Activated T-helper 1 cell treated with anti-CD3 and anti-CD28 coated beads, Interleukin-12 subunit alpha, Interleukin-12 subunit beta, Interleukin-2, Interleukin-4 antibody, amounts not matched to agents 30 ng/mL and 10 ng/mL and 1 ng/mL, durations not matched to agents 14 hours and 24 hours and 36 hours (primary cell): ENCODE measurements at regions of chr9 and their contacts with region 1.

Region 1: GRCh38 chr9:128322404-128323211 is at the starts of genes COQ4 and TRUB2:
- DNase-seq: peak; percentile 91
- H3K4me3 Mint-ChIP-seq: peak within 1 kb of the TSS; percentile 98
- H3K27ac Mint-ChIP-seq: peak within 1 kb of the TSS; percentile 100
- H3K4me1 Mint-ChIP-seq: peaks cover 12% of the 10 kb centered on the region
- H3K27me3 Mint-ChIP-seq: peaks cover 2% of the 10 kb centered on the region
- total RNA-seq, gene COQ4: 59.0 and 59.5 TPM in 2 replicates
- total RNA-seq, gene TRUB2: 41.8 and 44.0 TPM in 2 replicates

Region 2: DNA sequence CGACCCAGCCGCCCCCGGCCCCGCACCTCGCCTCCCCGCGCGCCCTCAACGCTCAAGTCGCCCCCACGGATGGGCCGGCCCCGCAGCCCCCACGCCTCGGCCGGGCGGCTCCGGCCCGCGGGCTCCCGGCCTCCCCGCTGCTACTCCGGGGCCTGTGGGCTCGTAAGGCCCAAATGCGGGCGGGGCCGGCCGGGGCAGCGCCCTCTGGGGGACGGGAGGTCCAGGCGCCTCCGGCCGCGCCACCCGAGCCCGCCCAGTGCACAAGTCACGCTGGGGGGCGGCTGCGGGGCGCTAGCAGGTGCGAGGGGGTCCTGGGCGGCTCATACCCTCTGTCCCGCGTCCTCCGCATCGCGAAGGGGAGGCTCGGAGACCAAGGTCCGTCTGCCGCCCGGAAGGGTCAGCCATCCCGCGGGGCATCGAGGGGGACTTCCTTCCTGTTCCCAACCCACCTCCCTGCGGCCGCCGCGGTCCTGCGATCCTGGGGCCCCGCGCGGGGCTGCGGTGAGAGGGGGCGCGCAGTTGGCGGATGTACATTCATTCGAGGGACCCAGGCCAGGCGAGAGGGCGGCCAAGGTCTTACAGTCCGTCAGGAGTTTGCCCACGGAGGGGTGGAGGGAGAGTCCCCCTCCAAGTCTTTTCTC is 131.1 kb before region 1 on chr9 and contains the start of gene CIZ1:
- intact Hi-C with region 1: loop called (anchors 1 kb)
- DNase-seq: peak; percentile 69
- H3K4me3 Mint-ChIP-seq: peak within 1 kb of the TSS; percentile 98
- H3K27ac Mint-ChIP-seq: peak within 1 kb of the TSS; percentile 96
- H3K4me1 Mint-ChIP-seq: peaks cover 23% of the 10 kb centered on the region
- H3K27me3 Mint-ChIP-seq: no peaks in the 10 kb centered on the region
- total RNA-seq, gene CIZ1: 154 and 158 TPM in 2 replicates

Region 3: DNA sequence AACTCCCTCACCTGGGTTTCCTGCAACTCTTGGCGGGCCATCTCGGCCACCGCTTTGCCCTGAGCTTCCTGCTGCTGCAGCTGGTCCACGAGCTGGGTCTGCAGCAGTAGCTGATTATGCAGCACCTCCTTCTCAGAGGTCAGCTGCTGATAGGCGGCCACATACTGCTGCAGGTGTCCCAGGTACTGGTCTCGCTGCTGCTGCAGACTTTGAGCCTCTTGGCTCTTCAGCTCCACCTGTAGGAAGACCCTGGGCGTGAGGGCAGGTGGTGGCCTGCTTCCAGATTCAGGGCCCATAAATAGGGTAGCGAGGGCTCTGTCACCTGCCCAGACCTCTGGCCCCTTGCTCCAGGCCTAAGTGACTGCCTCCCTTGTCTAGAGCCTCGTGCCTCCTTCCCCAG is 63.5 kb before region 1 on chr9:
- intact Hi-C with region 1: no loop called
- DNase-seq: no peak
- H3K4me3 Mint-ChIP-seq: no peak overlapping the region
- H3K27ac Mint-ChIP-seq: no peak overlapping the region
- H3K4me1 Mint-ChIP-seq: no peaks in the 10 kb centered on the region
- H3K27me3 Mint-ChIP-seq: no peaks in the 10 kb centered on the region

Region 4: GRCh38 chr9:128275996-128276573 is 46.5 kb before region 1 on chr9 and contains the starts of genes GOLGA2 and SWI5:
- intact Hi-C with region 1: loop called (anchors 1 kb)
- DNase-seq: peak; percentile 100
- H3K4me3 Mint-ChIP-seq: peak within 1 kb of the TSS; percentile 98
- H3K27ac Mint-ChIP-seq: peak within 1 kb of the TSS; percentile 91
- H3K4me1 Mint-ChIP-seq: peaks cover 54% of the 10 kb centered on the region
- H3K27me3 Mint-ChIP-seq: no peaks in the 10 kb centered on the region
- total RNA-seq, gene GOLGA2: 52.3 and 53.0 TPM in 2 replicates
- total RNA-seq, gene SWI5: 10.4 and 13.3 TPM in 2 replicates

Region 5: DNA sequence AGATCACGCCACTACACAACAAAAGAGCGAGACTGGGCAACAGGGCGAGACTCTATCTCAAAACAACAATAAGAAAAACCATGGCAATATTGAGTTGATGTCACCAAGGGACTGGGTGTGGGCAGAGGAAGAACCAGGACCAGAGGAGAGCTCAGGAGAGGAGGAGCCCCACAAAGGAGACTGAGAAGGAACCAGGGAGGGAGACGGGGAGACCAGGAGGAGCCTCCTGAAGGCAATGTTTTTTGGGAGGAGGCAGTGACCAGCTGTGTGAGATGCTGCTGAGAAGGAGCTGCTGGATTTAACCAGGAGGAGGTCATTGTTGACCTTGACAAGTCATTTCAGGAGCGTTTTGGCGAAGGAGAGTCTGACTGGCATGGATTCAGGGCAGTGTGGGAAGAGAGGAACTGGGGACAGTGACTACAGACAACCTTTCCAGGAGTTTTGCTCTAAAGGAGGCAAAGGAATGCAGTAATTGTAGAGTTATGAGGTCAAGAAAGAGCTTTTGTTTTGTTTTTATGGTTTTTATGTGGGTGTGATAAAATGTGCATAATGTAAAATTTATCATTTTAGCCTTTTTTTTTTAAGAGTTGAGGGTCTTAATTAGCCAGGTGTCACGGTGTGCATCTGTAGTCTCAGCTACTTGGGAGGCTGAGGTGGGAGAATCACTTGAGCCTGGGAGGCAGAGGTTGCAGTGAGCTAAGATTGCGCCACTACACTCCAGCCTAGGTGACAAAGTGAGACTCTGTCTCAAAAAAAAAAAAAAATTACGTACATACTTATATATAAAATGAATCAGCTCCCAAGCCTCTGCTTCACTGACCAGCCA is 18.2 kb before region 1 on chr9:
- intact Hi-C with region 1: no loop called
- DNase-seq: no peak
- H3K4me3 Mint-ChIP-seq: no peak overlapping the region
- H3K27ac Mint-ChIP-seq: no peak overlapping the region
- H3K4me1 Mint-ChIP-seq: no peaks in the 10 kb centered on the region
- H3K27me3 Mint-ChIP-seq: no peaks in the 10 kb centered on the region

Region 6: GRCh38 chr9:128370826-128371621 is 48.4 kb after region 1 on chr9 and contains the start of gene URM1:
- intact Hi-C with region 1: loop called (anchors 1 kb)
- DNase-seq: peak; percentile 96
- H3K4me3 Mint-ChIP-seq: peak within 1 kb of the TSS; percentile 96
- H3K27ac Mint-ChIP-seq: peak within 1 kb of the TSS; percentile 94
- H3K4me1 Mint-ChIP-seq: peaks cover 33% of the 10 kb centered on the region
- H3K27me3 Mint-ChIP-seq: no peaks in the 10 kb centered on the region
- total RNA-seq, gene URM1: 81.6 and 82.6 TPM in 2 replicates

Region 7: GRCh38 chr9:128504485-128505413 is 182.1 kb after region 1 on chr9 and contains the start of gene GLE1:
- intact Hi-C with region 1: loop called (anchors 1 kb)
- DNase-seq: peak; percentile 97
- H3K4me3 Mint-ChIP-seq: peak within 1 kb of the TSS; percentile 99
- H3K27ac Mint-ChIP-seq: peak within 1 kb of the TSS; percentile 99
- H3K4me1 Mint-ChIP-seq: peaks cover 23% of the 10 kb centered on the region
- H3K27me3 Mint-ChIP-seq: no peaks in the 10 kb centered on the region
- total RNA-seq, gene GLE1: 51.4 and 52.0 TPM in 2 replicates

Region 8: GRCh38 chr9:128635283-128636023 is 312.8 kb after region 1 on chr9:
- intact Hi-C with region 1: no loop called
- DNase-seq: no peak
- H3K4me3 Mint-ChIP-seq: no peak overlapping the region
- H3K27ac Mint-ChIP-seq: no peak overlapping the region
- H3K4me1 Mint-ChIP-seq: no peaks in the 10 kb centered on the region
- H3K27me3 Mint-ChIP-seq: no peaks in the 10 kb centered on the region